ENCODE measurements at regions of chr12 and their contacts with region 1.

Region 1: DNA sequence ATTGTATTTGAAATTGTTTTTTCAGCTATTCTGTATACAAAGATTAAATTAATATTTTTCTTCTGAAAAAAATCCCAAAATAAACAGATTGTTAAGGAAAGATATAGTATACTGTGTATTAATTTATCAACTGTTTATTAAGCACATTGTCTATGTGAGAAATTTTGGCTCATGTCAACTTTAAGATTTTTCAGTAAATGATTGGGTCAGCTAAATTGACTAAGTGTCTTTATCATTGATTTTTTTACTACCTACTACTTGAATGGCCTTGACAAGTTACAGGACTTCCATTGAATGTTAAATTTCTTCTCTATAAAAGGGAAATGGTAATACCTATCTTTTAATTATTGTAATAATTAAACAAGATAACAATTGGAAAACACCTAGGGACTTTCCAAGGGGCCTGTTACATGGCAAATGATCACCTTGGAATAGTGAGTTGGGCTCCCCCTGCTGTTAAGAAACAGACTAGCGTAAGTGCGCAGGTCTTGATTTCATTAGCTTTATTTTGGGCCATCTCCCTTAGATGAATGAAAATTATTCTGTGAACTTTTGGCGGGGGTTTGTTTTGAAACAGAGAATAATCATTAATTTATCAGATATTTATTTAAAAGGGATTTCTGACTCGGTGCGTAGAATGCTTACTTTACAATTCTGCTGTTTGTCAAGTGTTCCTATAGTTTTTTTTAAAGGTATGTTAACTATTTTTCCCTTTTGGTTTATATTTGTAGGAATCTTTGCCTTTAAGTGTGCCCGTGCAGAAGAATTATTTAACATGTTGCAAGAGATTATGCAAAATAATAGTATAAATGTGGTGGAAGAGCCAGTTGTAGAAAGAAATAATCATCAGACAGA is 14.5 kb upstream of the CCT2 start:
- DNase-seq: peak; percentile 20 to 57 (median 54)
- H3K4me3 ChIP-seq: no peak overlapping the region
- H3K4me3 Mint-ChIP-seq: no peak overlapping the region
- H3K27ac ChIP-seq: no peak overlapping the region
- H3K27ac Mint-ChIP-seq: peak overlapping the region in 5 of 8 donors; percentile 6 to 64 (median 26)
- H3K4me1 ChIP-seq: no peaks in the 10 kb centered on the region
- H3K4me1 Mint-ChIP-seq: no peaks in the 10 kb centered on the region
- H3K27me3 ChIP-seq: no peaks in the 10 kb centered on the region
- H3K27me3 Mint-ChIP-seq: no peaks in the 10 kb centered on the region

Region 2: DNA sequence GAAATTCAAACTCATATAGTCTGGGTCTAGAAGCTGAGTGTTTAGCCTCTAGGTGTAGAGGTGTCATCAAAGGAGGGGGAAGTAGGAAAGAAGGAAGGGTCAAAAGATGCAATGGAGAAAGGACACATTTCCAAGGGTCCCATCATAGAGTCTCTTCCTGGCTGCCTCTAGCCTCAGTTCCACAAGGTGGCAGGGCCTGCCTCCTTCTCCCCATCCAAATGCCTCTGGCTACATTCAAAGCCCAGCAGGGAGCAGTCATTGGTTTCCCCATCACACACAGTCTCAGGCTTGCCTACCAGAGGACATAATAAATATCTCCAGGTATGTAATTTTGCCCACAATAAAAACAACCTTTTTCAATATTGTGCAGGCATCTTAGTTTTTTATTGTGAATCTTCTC is 12.4 kb after region 1 on chr12:
- CTCF ChIA-PET with region 1: interaction called, 25 read pairs
- POLR2A ChIA-PET with region 1: no interaction called
- DNase-seq: no peak
- H3K4me3 ChIP-seq: no peak overlapping the region
- H3K4me3 Mint-ChIP-seq: peak overlapping the region in 3 of 7 donors; percentile 19 to 100 (median 48)
- H3K27ac ChIP-seq: no peak overlapping the region
- H3K27ac Mint-ChIP-seq: peak overlapping the region in 3 of 8 donors; percentile 51 to 66 (median 54)
- H3K4me1 ChIP-seq: peaks cover 10% of the 10 kb centered on the region
- H3K4me1 Mint-ChIP-seq: peaks cover 11 to 12% (median 11%) of the 10 kb centered on the region in 3 donors
- H3K27me3 ChIP-seq: no peaks in the 10 kb centered on the region
- H3K27me3 Mint-ChIP-seq: no peaks in the 10 kb centered on the region